Activated CD4-positive, alpha-beta memory T cell treated with anti-CD3 and anti-CD28 coated beads for 36 hours (primary cell): ENCODE measurements at regions of chr6 and their contacts with region 1.

Region 1: DNA sequence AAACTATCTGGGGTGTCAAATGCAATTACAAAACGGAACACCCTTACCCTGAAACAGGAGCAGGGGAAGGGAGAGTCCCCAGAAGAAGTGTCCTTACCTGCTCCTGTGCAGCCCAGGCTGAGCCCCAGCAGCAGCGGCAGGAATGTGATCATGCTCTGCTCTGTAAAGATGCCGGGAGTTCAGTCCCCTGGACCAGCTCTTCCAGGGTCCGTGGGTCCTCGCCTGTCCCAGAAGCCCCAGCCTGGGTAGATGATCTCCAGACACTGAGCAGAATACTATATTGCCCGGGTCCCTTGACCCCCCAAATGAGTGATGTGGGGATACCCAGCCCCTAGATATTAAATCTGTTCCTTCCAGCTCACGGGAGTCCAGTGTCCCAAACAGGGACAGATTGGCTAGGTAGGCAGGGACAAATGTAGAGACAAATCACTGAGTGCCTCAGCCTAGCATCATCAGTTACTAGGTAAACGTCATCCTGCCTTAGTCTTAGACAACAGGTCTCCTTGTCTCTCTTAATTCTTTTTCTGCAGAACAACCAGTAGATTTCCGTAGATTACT is at the start of gene HLA-DMB:
- DNase-seq: peak; percentile 52
- H3K4me3 Mint-ChIP-seq: peak within 1 kb of the TSS; percentile 77
- H3K27ac Mint-ChIP-seq: peak within 1 kb of the TSS; percentile 87
- H3K4me1 Mint-ChIP-seq: peaks cover 59% of the 10 kb centered on the region
- H3K27me3 Mint-ChIP-seq: no peaks in the 10 kb centered on the region
- total RNA-seq, gene HLA-DMB: 1.6 to 1.9 TPM

Region 2: DNA sequence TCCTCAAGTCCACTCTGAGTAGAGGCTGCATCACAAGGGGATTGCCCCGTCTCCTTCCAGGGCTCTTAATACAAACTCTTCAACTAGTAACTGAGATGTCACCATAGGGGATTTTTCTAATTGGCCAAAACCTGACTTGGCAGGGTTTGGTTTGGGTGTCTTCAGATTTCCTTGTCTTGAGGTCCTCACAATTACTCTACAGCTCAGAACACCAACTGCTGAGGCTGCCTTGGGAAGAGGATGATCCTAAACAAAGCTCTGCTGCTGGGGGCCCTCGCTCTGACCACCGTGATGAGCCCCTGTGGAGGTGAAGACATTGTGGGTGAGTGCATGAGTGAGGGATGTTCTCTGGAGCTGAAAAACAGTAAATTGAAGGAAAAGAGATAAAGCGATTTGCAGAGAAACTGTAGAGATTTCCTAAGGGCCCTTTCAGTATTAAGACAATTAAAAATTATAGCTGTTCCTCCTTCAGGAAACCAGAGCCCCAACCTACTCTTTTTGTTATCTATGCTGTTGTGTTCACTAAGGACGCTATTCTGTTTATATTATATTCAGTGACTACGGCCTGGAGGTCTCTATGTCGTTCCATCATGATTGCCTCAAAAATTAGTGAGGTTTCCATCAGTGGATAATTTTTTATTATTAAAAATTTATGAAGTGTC is 303.4 kb before region 1 on chr6 and contains the start of gene HLA-DQA1:
- CTCF ChIA-PET with region 1: no interaction called
- POLR2A ChIA-PET with region 1: no interaction called
- intact Hi-C with region 1: no loop called
- DNase-seq: no peak
- H3K4me3 Mint-ChIP-seq: no peak within 1 kb of the TSS
- H3K27ac Mint-ChIP-seq: no peak within 1 kb of the TSS
- H3K4me1 Mint-ChIP-seq: peaks cover 11% of the 10 kb centered on the region
- H3K27me3 Mint-ChIP-seq: no peaks in the 10 kb centered on the region
- total RNA-seq, gene HLA-DQA1: 0.97 to 1.4 TPM

Region 3: DNA sequence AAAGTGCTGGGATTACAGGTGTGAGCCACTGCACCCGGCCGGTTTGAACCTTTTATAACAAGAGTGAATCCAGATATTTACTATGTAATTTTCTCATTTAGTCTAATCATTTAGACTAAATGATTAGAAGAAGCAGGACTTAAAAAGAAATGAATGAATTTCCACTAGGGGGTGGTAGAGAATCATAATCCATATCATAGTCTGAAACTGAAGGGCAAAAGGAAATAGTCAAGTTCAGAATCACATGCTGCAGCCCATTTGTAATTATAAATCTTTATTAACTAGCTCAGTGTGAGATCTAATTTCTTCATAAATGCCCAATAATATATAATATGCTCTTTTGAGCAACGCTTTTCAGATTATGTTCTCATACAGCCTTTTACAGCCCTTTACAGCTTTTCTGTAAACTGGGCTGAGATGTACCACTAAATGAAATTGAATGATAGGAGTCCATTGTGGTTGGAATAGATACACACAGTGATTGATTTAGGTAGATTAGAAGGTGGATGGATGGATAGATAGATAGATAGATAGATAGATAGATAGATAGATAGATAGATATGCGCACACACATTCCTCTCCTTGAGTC is 54.9 kb before region 1 on chr6:
- CTCF ChIA-PET with region 1: interaction called, 10 read pairs
- POLR2A ChIA-PET with region 1: no interaction called
- intact Hi-C with region 1: loop called (anchors 5 kb)
- DNase-seq: no peak
- H3K4me3 Mint-ChIP-seq: no peak overlapping the region
- H3K27ac Mint-ChIP-seq: no peak overlapping the region
- H3K4me1 Mint-ChIP-seq: peaks cover 11% of the 10 kb centered on the region
- H3K27me3 Mint-ChIP-seq: no peaks in the 10 kb centered on the region

Region 4: GRCh38 chr6:32894080-32895005 is 46.4 kb before region 1 on chr6:
- CTCF ChIA-PET with region 1: interaction called, 5 read pairs
- POLR2A ChIA-PET with region 1: interaction called, 3 read pairs
- intact Hi-C with region 1: loop called (anchors 5 kb)
- DNase-seq: peak; percentile 97
- H3K4me3 Mint-ChIP-seq: peak overlapping the region; percentile 98
- H3K27ac Mint-ChIP-seq: peak overlapping the region; percentile 94
- H3K4me1 Mint-ChIP-seq: peaks cover 35% of the 10 kb centered on the region
- H3K27me3 Mint-ChIP-seq: no peaks in the 10 kb centered on the region